Aorta (tissue), 5 donors: ENCODE measurements at regions of chr3 and their contacts with region 1.

Region 1: GRCh38 chr3:28322464-28322863 is 26.1 kb upstream of the ZCWPW2 start:
- DNase-seq: no peak
- ATAC-seq: no peak
- H3K4me3 ChIP-seq: no peak overlapping the region
- H3K27ac ChIP-seq: no peak overlapping the region
- H3K4me1 ChIP-seq: peaks cover 2 to 3% of the 10 kb centered on the region in 2 donors
- H3K27me3 ChIP-seq: no peaks in the 10 kb centered on the region

Region 2: GRCh38 chr3:27712136-27713077 is 610.1 kb before region 1 on chr3:
- intact Hi-C with region 1: loop called in 1 of 2 experiments (anchors 5 kb)
- DNase-seq: peak; percentile 83 to 90
- ATAC-seq: peak; percentile 93
- H3K4me3 ChIP-seq: peak overlapping the region; percentile 44 to 77
- H3K27ac ChIP-seq: no peak overlapping the region
- H3K4me1 ChIP-seq: peaks cover 0 to 8% of the 10 kb centered on the region in 2 donors
- H3K27me3 ChIP-seq: no peaks in the 10 kb centered on the region